Mucosa of descending colon (tissue), 3 donors: ENCODE measurements at regions of chr5 and their contacts with region 1.

Region 1: GRCh38 chr5:135332519-135333150 is 66.4 kb downstream of the MACROH2A1 start:
- DNase-seq: no peak
- ATAC-seq: peak; percentile 42
- H3K4me3 ChIP-seq: no peak overlapping the region
- H3K4me1 ChIP-seq: no peaks in the 10 kb centered on the region
- CTCF ChIP-seq: no peak

Region 2: GRCh38 chr5:135208903-135209721 is 123.5 kb before region 1 on chr5:
- intact Hi-C with region 1: loop called (anchors 10 kb)
- DNase-seq: peak in 1 of 3 donors; percentile 24
- ATAC-seq: peak; percentile 54
- H3K4me3 ChIP-seq: no peak overlapping the region
- H3K4me1 ChIP-seq: no peaks in the 10 kb centered on the region
- CTCF ChIP-seq: no peak

Region 3: GRCh38 chr5:135214897-135215616 is 117.6 kb before region 1 on chr5:
- intact Hi-C with region 1: loop called in 1 of 2 experiments (anchors 10 kb)
- DNase-seq: no peak
- ATAC-seq: peak; percentile 33
- H3K4me3 ChIP-seq: no peak overlapping the region
- H3K4me1 ChIP-seq: no peaks in the 10 kb centered on the region
- CTCF ChIP-seq: no peak